ENCODE measurements at regions of chr3 and their contacts with region 1.

Region 1: DNA sequence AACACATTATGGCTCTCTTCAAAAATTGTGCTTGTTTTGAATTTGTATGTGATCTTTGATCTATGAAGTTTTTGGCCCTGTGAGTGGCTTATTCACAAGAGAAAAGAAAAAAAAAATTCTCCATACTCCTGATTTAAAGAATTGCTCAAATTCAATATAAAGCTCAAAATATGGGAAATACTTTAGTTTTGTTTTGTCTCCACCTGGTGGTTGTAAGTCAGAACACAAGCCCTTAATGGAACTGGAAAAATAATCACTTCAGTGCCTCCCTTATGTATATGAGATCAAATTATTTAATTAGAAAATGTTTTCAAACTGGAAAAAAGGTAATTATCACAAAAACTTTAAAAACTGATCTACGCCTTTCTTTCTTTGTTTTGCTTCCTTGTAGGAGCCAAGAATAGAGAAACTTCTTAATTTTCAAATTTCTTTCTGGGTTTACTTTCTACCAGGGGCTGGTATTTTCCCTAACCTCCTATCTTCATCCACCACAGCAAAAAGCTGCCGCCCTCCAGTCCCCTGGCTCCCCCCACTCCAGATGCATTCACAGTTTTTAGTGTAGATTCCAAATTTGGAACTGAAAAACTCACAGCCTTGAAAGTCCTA is 50.6 kb downstream of the SERP1 start:
- DNase-seq: peak; percentile 56
- H3K27ac ChIP-seq: no peak overlapping the region
- CTCF ChIP-seq: peak; percentile 74

Region 2: GRCh38 chr3:150408221-150409102 is 87.2 kb before region 1 on chr3 and contains the start of gene TSC22D2:
- CTCF ChIA-PET with region 1: interaction called, 22 read pairs
- POLR2A ChIA-PET with region 1: interaction called, 7 read pairs
- DNase-seq: peak; percentile 91
- H3K27ac ChIP-seq: peak within 1 kb of the TSS; percentile 100
- CTCF ChIP-seq: peak; percentile 20; the same call in 1 of the 2 replicates